ENCODE measurements at regions of chr14 and their contacts with region 1.

Region 1: GRCh38 chr14:77111043-77111442 is 13.0 kb downstream of the CIPC start:
- DNase-seq: no peak
- ATAC-seq: no peak
- H3K4me3 ChIP-seq: no peak overlapping the region
- H3K27ac ChIP-seq: no peak overlapping the region
- H3K4me1 ChIP-seq: no peaks in the 10 kb centered on the region
- CTCF ChIP-seq: no peak
- EP300 ChIP-seq: no peak
- POLR2A ChIP-seq: no peak
- RAD21 ChIP-seq: no peak

Region 2: DNA sequence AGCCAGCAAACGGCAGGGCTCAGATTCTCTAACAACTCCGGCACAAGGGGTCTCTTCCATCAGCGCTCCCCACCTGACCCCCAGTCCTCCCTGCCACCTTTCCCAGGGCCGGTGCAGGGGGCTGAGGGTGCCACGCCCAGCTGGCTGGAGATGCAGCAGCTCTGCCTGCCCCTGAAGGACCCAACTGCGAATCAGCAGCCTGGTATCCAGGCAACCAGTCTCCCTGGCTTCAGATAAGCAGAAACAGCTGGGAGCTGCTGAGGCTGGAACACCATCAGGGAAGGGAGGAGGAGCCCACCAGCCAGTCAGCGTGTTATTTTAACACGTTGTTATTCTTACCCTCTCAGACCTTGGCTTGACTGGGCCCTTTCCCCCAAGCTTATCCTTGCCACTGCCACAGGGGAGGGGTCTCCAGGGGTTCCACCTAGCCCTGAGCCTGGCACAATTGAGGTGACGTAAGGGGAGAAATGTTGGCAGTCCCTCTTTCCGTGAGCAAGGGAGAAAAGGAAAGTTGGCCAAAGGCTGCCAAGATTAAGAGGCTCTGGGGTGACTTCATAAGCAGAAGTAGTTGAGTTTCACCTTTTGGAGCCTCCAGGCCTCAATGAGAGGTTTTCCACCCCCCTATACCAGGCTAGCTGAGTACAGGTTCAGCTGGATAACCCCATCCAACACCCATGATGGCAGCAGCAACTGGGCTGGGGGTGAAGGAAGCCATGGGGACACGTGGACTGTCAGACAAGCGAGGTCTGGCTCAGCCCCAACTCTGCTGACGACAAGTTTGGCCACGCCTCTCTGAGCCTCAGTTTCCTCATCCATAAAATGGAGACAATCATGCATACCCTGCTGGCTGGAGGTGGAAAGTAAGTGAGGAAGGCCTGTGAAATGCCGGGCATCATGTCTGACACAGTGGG is 173.6 kb before region 1 on chr14:
- CTCF ChIA-PET with region 1: no interaction called
- POLR2A ChIA-PET with region 1: no interaction called
- DNase-seq: no peak
- ATAC-seq: peak; percentile 51 to 70; a peak in 4 of 6 replicates
- H3K4me3 ChIP-seq: no peak overlapping the region
- H3K27ac ChIP-seq: peak overlapping the region; percentile 42 to 65; a peak in 5 of 6 replicates
- H3K4me1 ChIP-seq: peaks cover 32% of the 10 kb centered on the region
- CTCF ChIP-seq: no peak
- EP300 ChIP-seq: no peak
- POLR2A ChIP-seq: no peak
- RAD21 ChIP-seq: no peak

Region 3: GRCh38 chr14:77097700-77098528 is 13.1 kb before region 1 on chr14 and contains the start of gene CIPC:
- CTCF ChIA-PET with region 1: interaction called, 10 read pairs
- POLR2A ChIA-PET with region 1: no interaction called
- DNase-seq: peak; percentile 97 to 99
- ATAC-seq: peak; percentile 91 to 96
- H3K4me3 ChIP-seq: peak within 1 kb of the TSS; percentile 92
- H3K27ac ChIP-seq: peak within 1 kb of the TSS; percentile 94 to 96
- H3K4me1 ChIP-seq: peaks cover 19% of the 10 kb centered on the region
- CTCF ChIP-seq: no peak
- EP300 ChIP-seq: peak in 1 of 2 experiments; percentile 35; a peak in 1 of 5 replicates
- POLR2A ChIP-seq: peak; percentile 87
- RAD21 ChIP-seq: no peak
- polyA plus RNA-seq, gene CIPC: 13.9 and 15.2 TPM in 2 replicates